ENCODE measurements at regions of chr14 and their contacts with region 1.

Region 1: GRCh38 chr14:58427281-58428117 is at the starts of genes KIAA0586 and TIMM9:
- H3K4me3 Mint-ChIP-seq: peak within 1 kb of the TSS; percentile 85
- H3K27ac Mint-ChIP-seq: peak within 1 kb of the TSS; percentile 94
- H3K4me1 Mint-ChIP-seq: peaks cover 10% of the 10 kb centered on the region
- H3K27me3 Mint-ChIP-seq: no peaks in the 10 kb centered on the region

Region 2: DNA sequence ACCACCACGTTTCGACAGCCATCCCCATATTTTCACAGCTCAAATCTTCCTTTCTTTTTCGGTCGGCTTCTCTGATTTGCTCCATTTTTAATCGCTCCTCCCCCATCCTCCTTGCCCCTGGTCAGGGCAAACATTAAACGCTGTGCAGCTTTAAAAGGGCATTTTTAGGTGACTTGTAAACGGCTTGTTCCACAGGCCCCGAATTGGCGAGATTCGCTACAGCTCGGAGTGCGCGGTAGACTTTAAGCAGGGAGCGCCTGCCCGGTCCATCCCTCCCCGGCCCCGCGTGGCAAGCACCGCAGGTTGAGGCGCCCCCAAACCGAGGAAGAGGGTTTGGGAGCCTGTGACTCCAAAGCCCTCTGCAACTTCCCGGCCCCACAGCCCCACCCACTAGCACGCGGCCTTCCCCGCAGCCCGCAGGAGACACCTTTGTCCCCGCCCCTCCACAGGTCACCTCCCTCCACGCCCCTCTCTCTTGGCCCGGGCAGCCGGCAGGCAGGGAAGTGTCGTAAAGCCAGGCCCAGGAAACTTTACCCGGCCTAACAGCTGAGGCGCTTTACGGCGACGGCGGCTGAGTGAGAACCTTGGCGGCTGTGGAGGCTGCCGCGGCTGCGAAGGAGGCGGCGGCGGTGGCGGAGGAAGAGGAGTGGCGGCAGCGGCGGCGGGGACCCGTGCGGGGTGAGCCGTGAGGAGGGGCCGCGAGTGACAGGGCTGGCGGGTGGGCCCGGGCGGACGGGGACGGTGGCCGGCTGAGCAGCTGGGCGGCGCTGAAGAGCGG is 1037.3 kb before region 1 on chr14 and contains the start of gene NAA30:
- intact Hi-C with region 1: loop called (anchors 10 kb)
- H3K4me3 Mint-ChIP-seq: peak within 1 kb of the TSS; percentile 88
- H3K27ac Mint-ChIP-seq: peak within 1 kb of the TSS; percentile 86
- H3K4me1 Mint-ChIP-seq: peaks cover 21% of the 10 kb centered on the region
- H3K27me3 Mint-ChIP-seq: no peaks in the 10 kb centered on the region

Region 3: GRCh38 chr14:58244556-58245387 is 182.7 kb before region 1 on chr14 and contains the start of gene PSMA3:
- intact Hi-C with region 1: loop called (anchors 1 kb)
- H3K4me3 Mint-ChIP-seq: peak within 1 kb of the TSS; percentile 95
- H3K27ac Mint-ChIP-seq: peak within 1 kb of the TSS; percentile 96
- H3K4me1 Mint-ChIP-seq: peaks cover 35% of the 10 kb centered on the region
- H3K27me3 Mint-ChIP-seq: no peaks in the 10 kb centered on the region

Region 4: GRCh38 chr14:58395812-58396788 is 31.4 kb before region 1 on chr14 and contains the start of gene TOMM20L:
- intact Hi-C with region 1: loop called (anchors 1 kb)
- H3K4me3 Mint-ChIP-seq: peak within 1 kb of the TSS; percentile 76
- H3K27ac Mint-ChIP-seq: peak within 1 kb of the TSS; percentile 85
- H3K4me1 Mint-ChIP-seq: peaks cover 23% of the 10 kb centered on the region
- H3K27me3 Mint-ChIP-seq: no peaks in the 10 kb centered on the region

Region 5: GRCh38 chr14:59483900-59484638 is 1056.6 kb after region 1 on chr14 and contains the starts of genes JKAMP and L3HYPDH:
- intact Hi-C with region 1: loop called (anchors 5 kb)
- H3K4me3 Mint-ChIP-seq: peak within 1 kb of the TSS; percentile 85
- H3K27ac Mint-ChIP-seq: peak within 1 kb of the TSS; percentile 93
- H3K4me1 Mint-ChIP-seq: peaks cover 53% of the 10 kb centered on the region
- H3K27me3 Mint-ChIP-seq: no peaks in the 10 kb centered on the region